ENCODE measurements at regions of chr7 and their contacts with region 1.

Region 1: DNA sequence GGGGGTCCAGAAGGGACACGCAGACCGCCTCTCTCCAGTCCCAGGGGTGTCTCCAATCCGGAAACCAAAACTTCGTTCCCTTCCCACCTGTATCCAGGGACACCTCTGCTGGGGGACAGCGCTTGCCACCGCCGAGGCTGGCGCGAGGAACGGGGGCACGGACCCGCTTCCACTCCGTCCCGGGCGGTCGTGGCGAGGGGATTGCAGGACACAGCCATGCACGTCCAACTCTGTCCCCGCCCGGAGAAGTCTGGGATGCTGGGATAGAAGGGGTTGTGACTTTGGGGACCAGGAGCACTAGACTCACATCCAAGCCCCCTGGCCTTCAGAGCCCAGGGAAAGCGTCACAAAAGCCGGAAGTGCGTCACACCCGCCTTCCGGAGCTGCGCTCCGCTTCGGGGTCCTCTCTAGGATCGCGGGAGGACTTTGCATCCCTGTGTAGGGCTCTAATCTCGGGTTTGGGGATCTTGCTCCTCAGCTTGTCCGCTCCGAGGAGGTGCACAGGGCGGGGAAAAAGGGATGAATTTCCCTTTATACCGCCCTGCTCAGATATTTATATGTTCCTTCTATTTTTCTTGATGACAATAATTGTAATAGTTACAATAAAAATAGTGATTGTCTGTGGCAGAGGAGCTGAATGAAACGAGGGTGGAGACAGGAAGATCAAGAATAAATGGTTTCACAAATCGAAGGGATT is at the start of gene FAM200A:
- DNase-seq: peak; percentile 75
- H3K4me3 Mint-ChIP-seq: peak within 1 kb of the TSS; percentile 90
- H3K27ac Mint-ChIP-seq: peak within 1 kb of the TSS; percentile 87
- H3K4me1 Mint-ChIP-seq: peaks cover 19% of the 10 kb centered on the region
- H3K27me3 Mint-ChIP-seq: no peaks in the 10 kb centered on the region
- total RNA-seq, gene FAM200A: 5.2 and 5.6 TPM in 2 replicates

Region 2: GRCh38 chr7:99472561-99473243 is 79.2 kb before region 1 on chr7 and contains the start of gene ZNF789:
- intact Hi-C with region 1: loop called (anchors 1 kb)
- DNase-seq: peak; percentile 96
- H3K4me3 Mint-ChIP-seq: peak within 1 kb of the TSS; percentile 96
- H3K27ac Mint-ChIP-seq: peak within 1 kb of the TSS; percentile 91
- H3K4me1 Mint-ChIP-seq: peaks cover 20% of the 10 kb centered on the region
- H3K27me3 Mint-ChIP-seq: peaks cover 2% of the 10 kb centered on the region
- total RNA-seq, gene ZNF789: 23.2 and 24.3 TPM in 2 replicates

Region 3: GRCh38 chr7:99631295-99632109 is 79.6 kb after region 1 on chr7:
- intact Hi-C with region 1: no loop called
- DNase-seq: no peak
- H3K4me3 Mint-ChIP-seq: no peak overlapping the region
- H3K27ac Mint-ChIP-seq: peak overlapping the region; percentile 51
- H3K4me1 Mint-ChIP-seq: peaks cover 30% of the 10 kb centered on the region
- H3K27me3 Mint-ChIP-seq: no peaks in the 10 kb centered on the region

Measured in activated T-helper 2 cell treated with anti-CD3 and anti-CD28 coated beads, Interferon-gamma antibody, Interleukin-2, Interleukin-4, amounts not matched to agents 10 μg/mL and 5 μg/mL and 100 μg/mL, durations not matched to agents 14 hours and 24 hours and 36 hours (primary cell).